Activated B cell treated with CpG ODN at 0.5 μM for 24 hours (primary cell): ENCODE measurements at regions of chr4 and their contacts with region 1.

Region 1: DNA sequence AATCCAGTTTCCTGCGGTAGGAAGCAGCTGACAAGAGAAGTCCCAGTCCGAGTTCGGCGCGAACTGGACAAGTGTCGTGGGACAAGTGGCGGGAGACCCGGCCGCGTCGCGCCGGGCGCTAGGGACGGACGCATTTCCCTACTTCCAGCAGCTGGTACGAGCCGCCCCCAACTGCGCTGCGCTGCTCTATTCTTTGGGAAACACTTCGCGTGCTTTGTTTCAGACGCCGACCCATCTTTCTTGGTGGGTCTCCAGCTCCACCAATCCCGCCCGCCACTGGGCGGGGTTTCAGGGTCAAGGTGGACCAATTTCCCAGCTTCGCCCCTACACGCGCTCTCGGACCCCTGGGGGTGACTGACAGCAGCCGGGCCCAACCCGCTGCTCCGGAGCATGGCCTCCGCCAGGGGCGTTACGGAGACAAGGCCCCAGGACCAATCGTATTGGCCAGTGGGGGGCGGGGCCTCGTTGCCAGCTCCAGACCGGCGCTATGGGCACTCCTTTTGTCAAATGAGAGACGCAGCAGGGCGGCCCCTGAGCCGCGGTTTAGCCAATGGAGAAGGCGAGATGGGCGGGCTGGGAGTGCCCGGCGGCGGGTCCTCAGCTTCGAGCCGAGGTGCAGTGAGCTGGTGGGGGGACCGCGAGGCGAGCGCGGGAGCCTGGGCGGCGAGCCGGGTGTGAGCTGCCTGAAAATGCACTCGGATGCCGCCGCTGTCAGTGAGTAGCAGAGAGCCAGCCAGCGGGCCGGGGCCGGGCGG is at the start of gene DCUN1D4:
- DNase-seq: peak; percentile 97
- ATAC-seq: peak; percentile 90
- H3K4me3 Mint-ChIP-seq: peak within 1 kb of the TSS; percentile 95
- H3K27ac Mint-ChIP-seq: peak within 1 kb of the TSS; percentile 90
- H3K4me1 Mint-ChIP-seq: peaks cover 15% of the 10 kb centered on the region
- H3K27me3 Mint-ChIP-seq: no peaks in the 10 kb centered on the region
- CTCF ChIP-seq: no peak
- total RNA-seq, gene DCUN1D4: 23.0 and 23.9 TPM in 2 replicates

Region 2: GRCh38 chr4:51862199-51862598 is 19.5 kb after region 1 on chr4:
- CTCF ChIA-PET with region 1: no interaction called
- POLR2A ChIA-PET with region 1: interaction called, 4 read pairs
- intact Hi-C with region 1: loop called (anchors 2 kb)
- DNase-seq: no peak
- ATAC-seq: no peak
- H3K4me3 Mint-ChIP-seq: no peak overlapping the region
- H3K27ac Mint-ChIP-seq: no peak overlapping the region
- H3K4me1 Mint-ChIP-seq: no peaks in the 10 kb centered on the region
- H3K27me3 Mint-ChIP-seq: no peaks in the 10 kb centered on the region
- CTCF ChIP-seq: no peak

Region 3: GRCh38 chr4:51906167-51906958 is 63.6 kb after region 1 on chr4:
- CTCF ChIA-PET with region 1: no interaction called
- POLR2A ChIA-PET with region 1: no interaction called
- intact Hi-C with region 1: loop called (anchors 1 kb)
- DNase-seq: no peak
- ATAC-seq: peak; percentile 92
- H3K4me3 Mint-ChIP-seq: no peak overlapping the region
- H3K27ac Mint-ChIP-seq: peak overlapping the region; percentile 51
- H3K4me1 Mint-ChIP-seq: peaks cover 13% of the 10 kb centered on the region
- H3K27me3 Mint-ChIP-seq: no peaks in the 10 kb centered on the region
- CTCF ChIP-seq: no peak

Region 4: GRCh38 chr4:52051619-52052474 is 209.1 kb after region 1 on chr4:
- CTCF ChIA-PET with region 1: no interaction called
- POLR2A ChIA-PET with region 1: interaction called, 9 read pairs
- intact Hi-C with region 1: loop called (anchors 1 kb)
- DNase-seq: peak; percentile 31
- ATAC-seq: peak; percentile 43
- H3K4me3 Mint-ChIP-seq: peak overlapping the region; percentile 88
- H3K27ac Mint-ChIP-seq: peak overlapping the region; percentile 51
- H3K4me1 Mint-ChIP-seq: peaks cover 26% of the 10 kb centered on the region
- H3K27me3 Mint-ChIP-seq: peaks cover 36% of the 10 kb centered on the region
- CTCF ChIP-seq: no peak

Region 5: DNA sequence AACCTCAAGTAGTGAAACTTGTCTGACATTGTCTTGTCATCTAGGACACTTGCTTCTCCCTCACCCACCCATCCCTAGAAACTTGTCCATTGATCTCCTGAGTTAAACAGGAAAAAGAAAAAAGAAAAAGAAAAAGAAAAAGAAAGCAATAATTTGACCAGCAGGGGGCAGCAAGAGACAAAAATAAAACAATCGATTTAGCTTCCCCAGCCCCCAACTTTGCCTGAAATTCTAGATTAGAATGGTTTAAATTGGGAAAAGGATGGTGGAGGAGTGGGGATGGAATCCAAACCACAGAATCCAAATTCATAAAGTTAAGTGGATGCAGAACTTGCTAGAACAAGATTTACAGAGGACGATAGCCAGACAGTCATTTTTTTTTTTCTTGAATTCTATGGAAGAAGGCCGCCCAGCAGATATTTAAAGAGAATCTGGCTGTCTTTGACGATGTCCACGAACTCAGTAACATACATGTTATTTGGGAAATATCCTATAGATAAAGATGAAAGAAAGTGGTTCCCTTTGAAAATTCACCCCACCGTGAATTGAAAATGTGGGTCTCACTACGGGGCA is 533.5 kb after region 1 on chr4:
- CTCF ChIA-PET with region 1: no interaction called
- POLR2A ChIA-PET with region 1: no interaction called
- intact Hi-C with region 1: no loop called
- DNase-seq: no peak
- ATAC-seq: no peak
- H3K4me3 Mint-ChIP-seq: no peak overlapping the region
- H3K27ac Mint-ChIP-seq: no peak overlapping the region
- H3K4me1 Mint-ChIP-seq: no peaks in the 10 kb centered on the region
- H3K27me3 Mint-ChIP-seq: peaks cover 12% of the 10 kb centered on the region
- CTCF ChIP-seq: peak; percentile 45

Region 6: GRCh38 chr4:52721968-52722815 is 879.5 kb after region 1 on chr4:
- CTCF ChIA-PET with region 1: no interaction called
- POLR2A ChIA-PET with region 1: no interaction called
- intact Hi-C with region 1: loop called (anchors 1 kb)
- DNase-seq: peak; percentile 75
- ATAC-seq: peak; percentile 91
- H3K4me3 Mint-ChIP-seq: peak overlapping the region; percentile 84
- H3K27ac Mint-ChIP-seq: peak overlapping the region; percentile 85
- H3K4me1 Mint-ChIP-seq: peaks cover 15% of the 10 kb centered on the region
- H3K27me3 Mint-ChIP-seq: no peaks in the 10 kb centered on the region
- CTCF ChIP-seq: no peak

Region 7: DNA sequence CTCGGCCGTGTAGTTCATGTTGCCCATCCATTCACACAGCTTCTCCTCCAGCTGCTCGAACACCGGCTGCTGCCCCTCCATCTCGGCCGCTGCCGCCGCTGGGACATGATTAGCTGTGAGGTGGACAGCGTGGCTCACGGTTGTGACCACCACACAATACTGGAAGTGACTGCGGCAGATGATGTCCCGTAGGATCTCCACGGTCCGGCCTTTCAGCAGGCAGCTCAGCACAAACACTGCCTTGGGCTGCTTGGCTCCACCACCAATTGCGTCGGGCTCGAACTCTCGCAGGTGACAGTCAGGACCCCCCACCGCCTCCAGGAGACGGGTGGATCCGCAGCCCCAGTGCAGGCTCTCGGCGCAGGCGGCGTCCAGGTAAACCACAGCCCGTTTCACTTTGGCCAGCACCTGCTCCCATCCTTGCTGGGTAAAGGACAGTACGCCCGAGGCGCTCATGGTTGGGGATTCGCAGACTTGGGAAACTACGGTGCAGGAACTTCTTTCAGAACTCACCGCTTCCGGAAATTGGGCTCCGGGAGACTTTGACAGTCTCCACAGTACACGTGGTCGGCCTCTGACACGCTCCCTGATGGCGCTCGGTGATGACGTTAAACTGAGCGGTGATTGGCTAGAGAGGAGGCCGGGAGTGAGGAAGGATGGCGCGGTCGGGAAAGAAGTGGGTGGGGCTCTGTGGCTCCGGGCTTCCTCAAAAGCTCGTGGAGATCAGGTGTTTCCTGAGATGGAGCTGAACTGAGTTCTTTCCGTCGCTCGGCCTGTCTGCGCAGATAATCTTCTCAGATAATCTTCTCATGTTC is 1523.0 kb after region 1 on chr4 and contains the start of gene SCFD2:
- CTCF ChIA-PET with region 1: no interaction called
- POLR2A ChIA-PET with region 1: no interaction called
- intact Hi-C with region 1: loop called (anchors 2 kb)
- DNase-seq: peak; percentile 94
- ATAC-seq: peak; percentile 98
- H3K4me3 Mint-ChIP-seq: peak within 1 kb of the TSS; percentile 95
- H3K27ac Mint-ChIP-seq: peak within 1 kb of the TSS; percentile 93
- H3K4me1 Mint-ChIP-seq: peaks cover 49% of the 10 kb centered on the region
- H3K27me3 Mint-ChIP-seq: peaks cover 12% of the 10 kb centered on the region
- CTCF ChIP-seq: no peak
- total RNA-seq, gene SCFD2: 36.1 and 46.6 TPM in 2 replicates